Aorta (tissue), 5 donors: ENCODE measurements at regions of chr14 and their contacts with region 1.

Region 1: GRCh38 chr14:24195191-24196070 is at the start of gene TM9SF1:
- DNase-seq: peak; percentile 93 to 97
- ATAC-seq: peak; percentile 96
- H3K4me3 ChIP-seq: peak within 1 kb of the TSS; percentile 65 to 77
- H3K27ac ChIP-seq: peak within 1 kb of the TSS; percentile 55 to 81
- H3K4me1 ChIP-seq: peaks cover 0 to 4% of the 10 kb centered on the region in 2 donors
- H3K27me3 ChIP-seq: no peaks in the 10 kb centered on the region
- total RNA-seq, gene TM9SF1: 35.3 to 37.3 TPM

Region 2: DNA sequence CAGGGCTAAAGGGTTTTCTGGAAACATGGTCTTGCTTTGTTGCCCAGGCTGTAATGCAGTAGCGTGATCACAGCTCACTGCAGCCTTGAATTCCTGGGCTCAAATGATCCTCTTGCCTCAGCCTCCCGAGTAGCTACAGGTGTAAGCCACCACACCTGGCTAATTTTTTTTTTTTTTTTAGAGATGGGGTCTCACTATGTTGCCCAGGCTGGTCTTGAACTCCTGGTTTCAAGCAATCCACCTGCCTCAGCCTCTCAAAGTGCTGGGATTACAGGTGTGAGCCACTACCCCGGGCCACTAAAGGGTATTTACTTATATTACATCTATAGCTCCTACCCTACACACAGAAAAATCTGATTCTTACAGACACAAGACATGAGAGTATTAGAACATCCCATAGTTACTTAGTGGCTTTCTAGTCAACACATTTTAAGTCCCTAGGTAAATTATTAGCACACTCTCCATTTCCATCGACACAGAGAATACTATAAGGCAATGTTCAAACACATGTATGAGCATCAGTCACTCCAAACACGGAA is 87.0 kb before region 1 on chr14:
- intact Hi-C with region 1: no loop called
- DNase-seq: no peak
- ATAC-seq: no peak
- H3K4me3 ChIP-seq: no peak overlapping the region
- H3K27ac ChIP-seq: no peak overlapping the region
- H3K4me1 ChIP-seq: no peaks in the 10 kb centered on the region
- H3K27me3 ChIP-seq: no peaks in the 10 kb centered on the region

Region 3: DNA sequence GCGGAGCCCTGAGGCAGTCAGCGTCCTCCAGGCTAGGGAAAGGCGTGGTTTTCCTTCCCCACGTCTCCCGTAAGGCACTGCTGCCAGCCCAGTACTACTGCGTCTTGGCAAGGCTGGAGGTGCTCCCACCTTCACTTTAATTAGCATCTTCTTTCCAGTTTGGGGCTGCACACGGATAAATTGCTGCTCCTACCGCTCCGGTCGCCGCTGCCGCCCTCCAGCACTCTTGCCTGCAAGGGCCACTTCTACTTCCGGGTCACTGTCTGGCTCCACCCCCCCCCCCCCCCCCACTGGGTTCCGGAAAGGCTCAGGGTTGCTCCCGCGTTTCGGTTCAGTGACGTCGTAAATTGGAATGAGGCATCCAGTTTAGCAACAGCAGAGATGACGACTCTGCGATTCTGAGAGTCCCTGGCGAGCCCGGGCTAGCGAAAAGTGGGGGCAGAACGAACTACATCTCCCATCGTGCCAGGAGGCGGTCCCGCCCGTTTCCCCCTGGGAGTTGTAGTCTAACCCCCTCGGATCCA is 36.8 kb after region 1 on chr14 and contains the start of gene NEDD8:
- intact Hi-C with region 1: loop called (anchors 1 to 5 kb)
- DNase-seq: peak; percentile 97
- ATAC-seq: peak; percentile 93
- H3K4me3 ChIP-seq: peak within 1 kb of the TSS; percentile 60 to 61
- H3K27ac ChIP-seq: peak within 1 kb of the TSS in 1 of 2 donors; percentile 93
- H3K4me1 ChIP-seq: peaks cover 0 to 3% of the 10 kb centered on the region in 2 donors
- H3K27me3 ChIP-seq: no peaks in the 10 kb centered on the region
- total RNA-seq, gene NEDD8: 122 to 123 TPM